ENCODE measurements at regions of chr21 and their contacts with region 1.

Region 1: GRCh38 chr21:31343680-31344480 is at the start of gene TIAM1:
- DNase-seq: peak; percentile 43 to 47
- ATAC-seq: peak; percentile 68 to 95 (median 88)
- H3K4me3 ChIP-seq: peak within 1 kb of the TSS in 9 of 10 donors; percentile 28 to 60 (median 55)
- H3K27ac ChIP-seq: peak within 1 kb of the TSS in 4 of 10 donors; percentile 25 to 77 (median 50)
- H3K4me1 ChIP-seq: peaks cover 0 to 51% (median 0%) of the 10 kb centered on the region in 9 donors
- H3K27me3 ChIP-seq: peaks cover 0 to 61% (median 46%) of the 10 kb centered on the region in 7 donors
- CTCF ChIP-seq: no peak
- total RNA-seq, gene TIAM1: 1.5 to 4.5 (median 2.1) TPM

Region 2: GRCh38 chr21:31198575-31198974 is 145.3 kb before region 1 on chr21:
- intact Hi-C with region 1: loop called in 2 of 10 experiments (anchors 10 kb)
- DNase-seq: no peak
- ATAC-seq: peak in 4 of 8 donors; percentile 45 to 56 (median 46)
- H3K4me3 ChIP-seq: no peak overlapping the region
- H3K27ac ChIP-seq: no peak overlapping the region
- H3K4me1 ChIP-seq: peaks cover 0 to 27% (median 0%) of the 10 kb centered on the region in 9 donors
- H3K27me3 ChIP-seq: peaks cover 0 to 16% (median 0%) of the 10 kb centered on the region in 7 donors
- CTCF ChIP-seq: peak; percentile 33 to 78 (median 69)

Region 3: DNA sequence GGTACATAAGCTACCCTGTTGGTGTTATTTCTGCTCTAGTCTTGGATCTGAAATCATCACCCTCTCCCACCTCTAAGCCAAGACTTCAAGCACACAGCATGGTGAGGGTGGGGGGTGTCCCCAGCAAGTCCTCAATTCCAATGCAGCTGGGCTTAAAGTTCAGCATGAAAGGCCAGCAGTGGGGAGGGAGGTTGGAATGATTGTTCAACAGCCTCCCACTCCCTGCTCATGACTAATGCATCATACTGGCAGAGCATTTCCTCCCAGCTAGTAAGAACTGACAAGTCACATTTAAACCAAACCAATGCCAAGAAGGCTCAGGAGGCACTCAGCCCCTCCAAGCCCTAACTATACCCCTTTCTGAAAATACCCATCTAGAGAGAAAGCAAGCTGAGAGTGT is 49.9 kb before region 1 on chr21:
- intact Hi-C with region 1: no loop called
- DNase-seq: no peak
- ATAC-seq: peak in 1 of 8 donors; percentile 86
- H3K4me3 ChIP-seq: no peak overlapping the region
- H3K27ac ChIP-seq: no peak overlapping the region
- H3K4me1 ChIP-seq: no peaks in the 10 kb centered on the region
- H3K27me3 ChIP-seq: no peaks in the 10 kb centered on the region
- CTCF ChIP-seq: no peak

Region 4: GRCh38 chr21:31426235-31426797 is 82.4 kb after region 1 on chr21:
- intact Hi-C with region 1: no loop called
- DNase-seq: no peak
- ATAC-seq: no peak
- H3K4me3 ChIP-seq: no peak overlapping the region
- H3K27ac ChIP-seq: no peak overlapping the region
- H3K4me1 ChIP-seq: no peaks in the 10 kb centered on the region
- H3K27me3 ChIP-seq: no peaks in the 10 kb centered on the region
- CTCF ChIP-seq: no peak

Region 5: DNA sequence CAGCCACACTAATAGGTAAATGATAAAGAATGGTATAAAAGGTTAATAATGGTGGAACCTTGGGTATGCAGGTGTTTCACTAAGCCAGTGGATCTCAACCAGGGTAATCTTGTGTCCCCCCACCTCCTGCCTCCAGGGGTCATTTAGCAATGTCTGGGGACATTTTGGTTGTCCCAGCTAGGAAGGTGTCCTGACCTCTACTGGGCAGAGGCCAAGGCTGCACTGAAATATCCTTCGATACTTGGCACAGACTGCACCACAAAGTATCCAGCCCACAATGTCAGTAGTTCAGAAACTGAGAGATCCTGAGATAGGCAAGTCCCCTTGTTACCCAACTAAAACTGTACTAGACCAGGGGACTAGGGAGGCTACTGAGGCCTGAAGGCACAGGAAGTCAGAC is 113.8 kb after region 1 on chr21:
- intact Hi-C with region 1: loop called in 1 of 10 experiments (anchors 5 kb)
- DNase-seq: no peak
- ATAC-seq: no peak
- H3K4me3 ChIP-seq: no peak overlapping the region
- H3K27ac ChIP-seq: no peak overlapping the region
- H3K4me1 ChIP-seq: no peaks in the 10 kb centered on the region
- H3K27me3 ChIP-seq: no peaks in the 10 kb centered on the region
- CTCF ChIP-seq: peak in 1 of 9 donors; percentile 11

Region 6: DNA sequence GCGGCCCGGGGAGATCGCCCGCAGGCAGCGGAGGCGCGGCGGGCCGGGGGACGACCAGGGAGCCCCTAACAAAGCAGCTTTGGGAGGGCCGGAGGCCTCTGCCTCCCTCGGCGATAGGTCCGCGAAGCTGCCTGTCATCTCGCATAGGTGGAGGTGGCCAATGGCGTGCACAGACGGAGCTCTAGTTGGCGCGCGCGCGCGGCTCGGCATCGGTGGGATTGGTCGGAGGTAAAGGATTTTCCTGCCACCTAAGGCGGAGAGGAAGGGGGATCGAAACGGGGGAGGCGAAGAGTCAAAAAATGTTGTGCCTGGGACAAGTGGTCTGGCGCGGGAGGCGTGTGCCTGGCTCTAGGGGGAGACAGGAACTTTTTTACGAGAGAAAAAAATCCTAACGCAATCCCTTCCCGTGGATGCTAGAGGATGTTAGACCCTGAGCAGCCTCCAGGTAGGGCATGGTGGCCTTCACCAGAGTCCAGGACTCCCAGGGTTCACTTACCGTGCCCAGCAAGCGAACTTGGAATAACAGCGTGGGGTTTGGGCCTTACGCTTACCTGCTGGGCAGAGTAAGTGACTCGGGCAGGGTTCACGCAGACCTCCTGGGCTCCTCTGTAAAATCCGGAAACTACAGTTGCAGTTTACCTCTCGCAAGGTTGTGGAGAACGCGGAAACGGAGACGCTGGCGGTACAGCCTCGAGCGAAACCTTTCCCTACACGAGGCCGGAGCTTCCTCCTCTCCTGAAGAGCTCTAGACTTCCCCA is 215.7 kb after region 1 on chr21:
- intact Hi-C with region 1: loop called in 1 of 10 experiments (anchors 10 kb)
- DNase-seq: peak; percentile 92
- ATAC-seq: peak; percentile 89 to 94 (median 91)
- H3K4me3 ChIP-seq: peak overlapping the region; percentile 35 to 89 (median 67)
- H3K27ac ChIP-seq: no peak overlapping the region
- H3K4me1 ChIP-seq: peaks cover 9 to 25% (median 20%) of the 10 kb centered on the region in 9 donors
- H3K27me3 ChIP-seq: peaks cover 17 to 70% (median 54%) of the 10 kb centered on the region in 7 donors
- CTCF ChIP-seq: no peak

Region 7: DNA sequence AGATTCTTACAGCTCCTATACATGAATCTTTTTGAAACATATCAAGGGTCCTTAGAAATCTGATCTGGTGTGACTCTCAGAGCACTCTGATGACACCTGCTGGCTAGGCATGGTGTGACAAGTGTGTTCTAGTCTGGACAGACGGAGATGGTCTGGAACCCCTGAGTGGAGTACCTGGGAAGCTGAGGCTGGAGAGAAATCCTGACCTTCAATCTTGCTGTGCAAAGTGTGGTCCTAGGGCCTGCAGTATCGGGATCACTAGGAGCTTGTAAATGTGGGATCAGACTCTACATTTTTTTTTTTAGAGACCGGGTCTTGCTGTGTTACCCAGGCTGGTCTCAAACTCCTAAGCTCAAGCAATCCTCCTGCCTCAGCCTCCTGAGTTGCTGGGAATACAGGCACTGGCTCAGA is 237.0 kb after region 1 on chr21:
- intact Hi-C with region 1: loop called in 3 of 10 experiments (anchors 5 to 10 kb)
- DNase-seq: peak; percentile 48 to 62
- ATAC-seq: peak in 7 of 8 donors; percentile 58 to 85 (median 69)
- H3K4me3 ChIP-seq: no peak overlapping the region
- H3K27ac ChIP-seq: no peak overlapping the region
- H3K4me1 ChIP-seq: peaks cover 0 to 9% (median 0%) of the 10 kb centered on the region in 9 donors
- H3K27me3 ChIP-seq: peaks cover 0 to 19% (median under 1%) of the 10 kb centered on the region in 7 donors
- CTCF ChIP-seq: peak; percentile 66 to 86 (median 82)

Region 8: GRCh38 chr21:32442566-32443318 is 1098.9 kb after region 1 on chr21:
- intact Hi-C with region 1: no loop called
- DNase-seq: no peak
- ATAC-seq: peak in 4 of 8 donors; percentile 10 to 36 (median 18)
- H3K4me3 ChIP-seq: no peak overlapping the region
- H3K27ac ChIP-seq: peak overlapping the region in 3 of 10 donors; percentile 49 to 56 (median 52)
- H3K4me1 ChIP-seq: peaks cover 0 to 27% (median 7%) of the 10 kb centered on the region in 9 donors
- H3K27me3 ChIP-seq: no peaks in the 10 kb centered on the region
- CTCF ChIP-seq: no peak